ENCODE measurements at regions of chr17 and their contacts with region 1.

Region 1: GRCh38 chr17:81294856-81295680 is at the start of gene SLC38A10:
- DNase-seq: peak; percentile 98
- total RNA-seq, gene SLC38A10: 36.0 TPM

Region 2: GRCh38 chr17:81135503-81136278 is 159.4 kb before region 1 on chr17:
- intact Hi-C with region 1: no loop called
- DNase-seq: no peak

Region 3: GRCh38 chr17:81339534-81340296 is 44.6 kb after region 1 on chr17:
- intact Hi-C with region 1: loop called (anchors 5 kb)
- DNase-seq: no peak

Region 4: GRCh38 chr17:81512560-81513371 is 217.7 kb after region 1 on chr17 and contains the start of gene ACTG1:
- intact Hi-C with region 1: no loop called
- DNase-seq: peak; percentile 97
- total RNA-seq, gene ACTG1: 634 TPM